IMR-90 (cell line): ENCODE measurements at regions of chr5 and their contacts with region 1.

Region 1: GRCh38 chr5:44774279-44774880 is 34.4 kb upstream of the MRPS30 start:
- DNase-seq: peak; percentile 52
- ATAC-seq: peak; percentile 82
- H3K4me3 ChIP-seq: no peak overlapping the region
- H3K27ac ChIP-seq: no peak overlapping the region
- H3K4me1 ChIP-seq: no peaks in the 10 kb centered on the region
- H3K27me3 ChIP-seq: no peaks in the 10 kb centered on the region
- CTCF ChIP-seq: peak; percentile 68
- POLR2A ChIP-seq: no peak
- RAD21 ChIP-seq: peak; percentile 76

Region 2: GRCh38 chr5:43401827-43402226 is 1372.6 kb before region 1 on chr5:
- CTCF ChIA-PET with region 1: no interaction called
- POLR2A ChIA-PET with region 1: no interaction called
- dilution Hi-C with region 1: no loop called
- in situ Hi-C with region 1: no loop called
- intact Hi-C with region 1: loop called (anchors 5 kb)
- DNase-seq: peak; percentile 13
- ATAC-seq: peak; percentile 56; the same call in 1 of the 2 replicates
- H3K4me3 ChIP-seq: no peak overlapping the region
- H3K27ac ChIP-seq: no peak overlapping the region
- H3K4me1 ChIP-seq: no peaks in the 10 kb centered on the region
- H3K27me3 ChIP-seq: peaks cover 8% of the 10 kb centered on the region
- CTCF ChIP-seq: 0 out of 2 replicates have a peak, but pooled peaks have one; percentile 17
- POLR2A ChIP-seq: no peak
- RAD21 ChIP-seq: no peak

Region 3: DNA sequence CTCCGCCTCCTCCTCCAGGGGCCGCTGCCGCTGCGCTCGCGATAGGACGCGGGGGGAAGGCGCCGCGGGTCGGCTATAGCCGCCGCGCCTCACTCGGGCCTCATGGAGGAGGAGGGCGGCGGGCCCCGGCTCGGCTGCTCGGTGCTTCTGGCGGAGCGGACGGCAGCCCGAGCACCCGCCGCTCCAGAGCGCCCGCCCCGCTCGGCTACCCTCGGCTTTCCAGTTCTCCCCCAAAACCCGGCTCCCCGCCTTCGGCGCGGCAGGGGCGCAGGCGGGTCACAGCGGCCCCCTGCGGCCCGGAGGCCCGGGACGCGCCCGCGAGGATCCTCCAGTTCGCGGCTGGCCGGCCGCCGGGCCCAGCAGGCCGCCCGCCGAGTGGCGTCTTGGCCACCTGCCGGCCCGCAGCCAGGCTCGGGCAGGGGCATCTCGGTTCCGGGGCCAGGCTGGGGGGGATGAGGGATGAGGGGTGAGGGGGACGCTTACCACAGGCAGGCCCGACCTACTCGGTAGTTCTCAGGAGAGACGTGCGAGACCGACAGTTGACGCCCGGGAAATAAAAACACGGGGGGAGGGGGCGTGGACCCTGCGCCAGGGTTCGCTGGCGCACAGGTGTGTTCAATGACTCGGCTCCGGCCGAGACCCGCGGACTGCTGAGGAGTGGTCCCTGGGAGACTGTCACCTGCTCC is 1217.4 kb before region 1 on chr5 and contains the start of gene PAIP1:
- CTCF ChIA-PET with region 1: no interaction called
- POLR2A ChIA-PET with region 1: no interaction called
- dilution Hi-C with region 1: no loop called
- in situ Hi-C with region 1: no loop called
- intact Hi-C with region 1: loop called (anchors 10 kb)
- DNase-seq: peak; percentile 86
- ATAC-seq: peak; percentile 92
- H3K4me3 ChIP-seq: peak within 1 kb of the TSS; percentile 65
- H3K27ac ChIP-seq: peak within 1 kb of the TSS; percentile 74
- H3K4me1 ChIP-seq: peaks cover 4% of the 10 kb centered on the region
- H3K27me3 ChIP-seq: no peaks in the 10 kb centered on the region
- CTCF ChIP-seq: peak; percentile 63
- POLR2A ChIP-seq: peak; percentile 84
- RAD21 ChIP-seq: no peak
- total RNA-seq, gene PAIP1: 101 and 123 TPM in 2 replicates

Region 4: DNA sequence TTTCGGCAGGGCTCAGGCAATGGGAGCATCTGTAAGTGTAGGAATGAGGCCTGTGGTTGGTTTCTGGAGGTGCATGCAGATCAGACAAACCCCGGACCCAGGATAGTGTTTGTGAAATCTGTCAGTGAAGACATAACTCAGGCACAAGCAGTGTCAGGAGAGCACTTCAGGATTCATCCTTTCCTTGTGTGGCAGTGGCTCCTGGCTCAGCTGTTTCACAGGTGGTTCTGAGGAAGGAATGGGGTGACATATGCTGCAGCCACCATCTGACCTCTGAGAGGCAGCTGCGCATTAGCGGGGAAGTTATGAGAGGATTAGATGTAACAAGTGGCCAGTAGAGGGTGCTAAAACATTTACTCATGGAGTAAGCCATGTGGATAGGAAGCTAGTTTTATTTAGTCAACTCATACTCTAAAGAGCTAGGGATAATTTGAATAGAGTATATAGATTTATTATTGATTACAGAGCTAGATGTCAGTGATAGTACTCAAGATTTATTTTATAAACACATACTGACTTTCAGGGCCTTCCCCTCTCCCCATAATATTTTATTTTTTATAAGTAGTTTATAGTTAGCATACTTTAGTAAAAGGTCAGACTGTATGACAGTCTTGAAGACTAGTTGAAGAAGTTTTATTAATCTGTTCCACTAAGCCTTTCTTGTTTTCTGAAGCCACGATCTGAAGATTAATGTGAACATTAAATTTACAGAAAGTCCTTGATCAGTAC is 1143.0 kb before region 1 on chr5:
- CTCF ChIA-PET with region 1: interaction called, 3 read pairs
- POLR2A ChIA-PET with region 1: no interaction called
- dilution Hi-C with region 1: no loop called
- in situ Hi-C with region 1: loop called (anchors 10 kb)
- intact Hi-C with region 1: loop called (anchors 5 kb)
- DNase-seq: peak; percentile 87
- ATAC-seq: peak; percentile 96
- H3K4me3 ChIP-seq: no peak overlapping the region
- H3K27ac ChIP-seq: no peak overlapping the region
- H3K4me1 ChIP-seq: peaks cover 3% of the 10 kb centered on the region; the same call in 1 of the 2 replicates
- H3K27me3 ChIP-seq: no peaks in the 10 kb centered on the region
- CTCF ChIP-seq: peak; percentile 83
- POLR2A ChIP-seq: no peak
- RAD21 ChIP-seq: peak; percentile 83

Region 5: GRCh38 chr5:43729846-43730478 is 1044.4 kb before region 1 on chr5:
- CTCF ChIA-PET with region 1: interaction called, 4 read pairs
- POLR2A ChIA-PET with region 1: no interaction called
- dilution Hi-C with region 1: no loop called
- in situ Hi-C with region 1: loop called (anchors 25 kb)
- intact Hi-C with region 1: loop called (anchors 2 kb)
- DNase-seq: peak; percentile 51
- ATAC-seq: peak; percentile 62
- H3K4me3 ChIP-seq: no peak overlapping the region
- H3K27ac ChIP-seq: no peak overlapping the region
- H3K4me1 ChIP-seq: peaks cover 1% of the 10 kb centered on the region; the same call in 1 of the 2 replicates
- H3K27me3 ChIP-seq: no peaks in the 10 kb centered on the region
- CTCF ChIP-seq: peak; percentile 69
- POLR2A ChIP-seq: no peak
- RAD21 ChIP-seq: peak; percentile 72

Region 6: GRCh38 chr5:44332285-44332971 is 442.0 kb before region 1 on chr5:
- CTCF ChIA-PET with region 1: no interaction called
- POLR2A ChIA-PET with region 1: no interaction called
- dilution Hi-C with region 1: no loop called
- in situ Hi-C with region 1: no loop called
- intact Hi-C with region 1: loop called (anchors 10 kb)
- DNase-seq: peak; percentile 52
- ATAC-seq: peak; percentile 66; the same call in 1 of the 2 replicates
- H3K4me3 ChIP-seq: no peak overlapping the region
- H3K27ac ChIP-seq: no peak overlapping the region
- H3K4me1 ChIP-seq: no peaks in the 10 kb centered on the region
- H3K27me3 ChIP-seq: no peaks in the 10 kb centered on the region
- CTCF ChIP-seq: peak; percentile 70
- POLR2A ChIP-seq: no peak
- RAD21 ChIP-seq: peak; percentile 70

Region 7: DNA sequence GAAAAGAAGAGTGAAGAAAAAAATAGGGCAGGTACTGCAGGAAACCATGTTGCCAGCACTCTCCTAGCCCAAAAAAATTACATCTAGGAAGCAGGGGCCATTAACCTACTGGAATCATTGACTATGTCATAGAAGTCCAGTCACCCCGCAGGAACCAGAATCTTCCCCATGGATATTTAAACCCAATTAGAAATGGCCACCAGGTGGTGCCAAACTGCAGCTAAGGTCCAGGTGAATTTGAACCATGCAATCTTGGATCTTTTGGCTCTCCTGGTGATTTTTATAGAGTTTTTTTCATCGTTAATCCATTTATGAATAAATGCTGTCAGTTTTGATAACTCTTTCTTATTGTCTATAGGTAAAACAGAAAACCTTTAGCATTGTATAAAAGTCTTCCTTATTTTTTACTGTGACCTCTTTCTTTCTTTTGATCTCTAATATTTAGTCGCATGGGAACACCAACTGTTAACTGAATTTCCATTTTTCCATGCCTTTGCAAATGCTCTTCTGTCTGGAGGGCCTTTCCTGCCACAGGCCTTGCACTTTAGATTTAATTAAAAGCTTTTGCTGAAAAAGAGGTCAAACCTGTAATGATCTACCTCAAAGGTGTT is 237.6 kb before region 1 on chr5:
- CTCF ChIA-PET with region 1: no interaction called
- POLR2A ChIA-PET with region 1: no interaction called
- dilution Hi-C with region 1: no loop called
- in situ Hi-C with region 1: no loop called
- intact Hi-C with region 1: loop called (anchors 1 kb)
- DNase-seq: peak; percentile 17
- ATAC-seq: no peak
- H3K4me3 ChIP-seq: no peak overlapping the region
- H3K27ac ChIP-seq: no peak overlapping the region
- H3K4me1 ChIP-seq: no peaks in the 10 kb centered on the region
- H3K27me3 ChIP-seq: no peaks in the 10 kb centered on the region
- CTCF ChIP-seq: peak; percentile 51
- POLR2A ChIP-seq: no peak
- RAD21 ChIP-seq: peak; percentile 41

Region 8: DNA sequence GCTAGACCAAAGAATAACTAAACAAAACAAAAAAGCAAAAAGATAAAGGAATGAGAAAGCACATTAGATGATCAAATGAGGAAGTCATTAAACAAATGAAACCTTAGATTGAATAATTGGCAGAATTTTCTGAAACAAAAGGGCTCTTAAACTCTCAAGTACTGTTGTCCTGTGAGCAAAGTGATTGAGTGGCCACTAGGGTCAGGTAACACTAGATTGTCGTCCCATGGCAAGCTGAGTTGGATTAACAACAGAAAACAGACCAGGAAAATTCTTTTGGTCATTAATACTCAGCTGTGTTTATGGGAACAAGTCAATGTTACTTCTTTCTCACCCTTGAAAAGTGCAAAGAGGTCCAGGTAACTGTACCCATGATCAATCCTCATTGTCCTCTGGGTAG is 47.3 kb before region 1 on chr5:
- CTCF ChIA-PET with region 1: no interaction called
- POLR2A ChIA-PET with region 1: no interaction called
- dilution Hi-C with region 1: no loop called
- in situ Hi-C with region 1: no loop called
- intact Hi-C with region 1: no loop called
- DNase-seq: no peak
- ATAC-seq: no peak
- H3K4me3 ChIP-seq: no peak overlapping the region
- H3K27ac ChIP-seq: no peak overlapping the region
- H3K4me1 ChIP-seq: no peaks in the 10 kb centered on the region
- H3K27me3 ChIP-seq: no peaks in the 10 kb centered on the region
- CTCF ChIP-seq: no peak
- POLR2A ChIP-seq: no peak
- RAD21 ChIP-seq: no peak

Region 9: GRCh38 chr5:44862808-44863207 is 88.4 kb after region 1 on chr5:
- CTCF ChIA-PET with region 1: no interaction called
- POLR2A ChIA-PET with region 1: no interaction called
- dilution Hi-C with region 1: no loop called
- in situ Hi-C with region 1: no loop called
- intact Hi-C with region 1: no loop called
- DNase-seq: peak; percentile 1
- ATAC-seq: no peak
- H3K4me3 ChIP-seq: no peak overlapping the region
- H3K27ac ChIP-seq: no peak overlapping the region
- H3K4me1 ChIP-seq: no peaks in the 10 kb centered on the region
- H3K27me3 ChIP-seq: no peaks in the 10 kb centered on the region
- CTCF ChIP-seq: 0 out of 2 replicates have a peak, but pooled peaks have one; percentile 22
- POLR2A ChIP-seq: no peak
- RAD21 ChIP-seq: no peak; the same call in 1 of the 2 replicates